HepG2 (cell line): ENCODE measurements at regions of chr2 and their contacts with region 1.

Region 1: GRCh38 chr2:191521608-191522208 is 156.2 kb upstream of the NABP1 start:
- DNase-seq: peak; percentile 40
- ATAC-seq: no peak
- H3K4me3 ChIP-seq: no peak overlapping the region
- H3K27ac ChIP-seq: no peak overlapping the region
- H3K4me1 ChIP-seq: no peaks in the 10 kb centered on the region
- H3K27me3 ChIP-seq: peaks cover 0 to 11% of the 10 kb centered on the region in 2 experiments; a peak in 2 of 5 replicates
- CTCF ChIP-seq: peak; percentile 74
- EP300 ChIP-seq: no peak
- POLR2A ChIP-seq: no peak
- RAD21 ChIP-seq: 0 out of 2 replicates have a peak, but pooled peaks have one; percentile 31

Region 2: GRCh38 chr2:191051825-191052778 is 469.6 kb before region 1 on chr2:
- CTCF ChIA-PET with region 1: no interaction called
- POLR2A ChIA-PET with region 1: no interaction called
- in situ Hi-C with region 1: loop called (anchors 25 kb)
- intact Hi-C with region 1: loop called (anchors 1 kb)
- DNase-seq: peak; percentile 56
- ATAC-seq: peak; percentile 72
- H3K4me3 ChIP-seq: no peak overlapping the region
- H3K27ac ChIP-seq: no peak overlapping the region
- H3K4me1 ChIP-seq: peaks cover 17% of the 10 kb centered on the region
- H3K27me3 ChIP-seq: peaks cover 0 to 1% of the 10 kb centered on the region in 2 experiments; a peak in 2 of 5 replicates
- CTCF ChIP-seq: peak; percentile 64
- EP300 ChIP-seq: no peak
- POLR2A ChIP-seq: no peak
- RAD21 ChIP-seq: no peak

Region 3: GRCh38 chr2:191165176-191165643 is 356.5 kb before region 1 on chr2:
- CTCF ChIA-PET with region 1: interaction called, 29 read pairs
- POLR2A ChIA-PET with region 1: no interaction called
- in situ Hi-C with region 1: loop called (anchors 10 kb)
- intact Hi-C with region 1: loop called (anchors 1 kb)
- DNase-seq: peak; percentile 23
- ATAC-seq: peak; percentile 82
- H3K4me3 ChIP-seq: no peak overlapping the region
- H3K27ac ChIP-seq: no peak overlapping the region
- H3K4me1 ChIP-seq: peaks cover 16% of the 10 kb centered on the region
- H3K27me3 ChIP-seq: no peaks in the 10 kb centered on the region
- CTCF ChIP-seq: peak; percentile 60
- EP300 ChIP-seq: no peak
- POLR2A ChIP-seq: no peak
- RAD21 ChIP-seq: no peak

Region 4: DNA sequence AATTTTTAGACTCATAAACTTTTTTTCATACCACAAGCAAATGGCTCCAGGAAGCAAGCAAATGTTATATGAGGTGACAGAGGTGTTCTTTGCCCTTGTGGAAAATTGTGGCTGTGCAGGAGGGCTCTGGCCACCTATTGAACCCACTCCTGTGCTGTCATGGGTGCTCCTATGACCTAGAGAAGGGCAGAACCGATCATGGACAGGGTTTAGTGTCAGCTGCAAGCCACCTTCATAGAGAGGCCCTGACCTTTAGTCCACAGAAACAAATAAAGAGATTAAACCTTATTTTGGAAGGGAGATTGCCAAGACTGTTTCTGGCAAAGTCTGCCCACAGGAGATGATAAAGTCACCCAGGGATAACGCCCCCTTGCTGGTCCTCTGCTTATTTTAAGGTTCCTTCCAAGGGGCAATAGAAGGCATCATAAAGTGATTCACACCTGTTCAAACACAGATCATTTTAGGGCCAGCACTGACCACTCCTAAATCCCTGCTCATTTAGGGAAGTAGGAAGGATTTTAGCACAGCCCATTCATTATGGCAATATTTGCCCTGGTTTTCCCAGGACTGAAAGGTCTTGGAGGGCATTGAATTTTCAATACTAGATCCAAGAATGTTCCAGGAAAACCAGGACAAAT is 344.8 kb before region 1 on chr2:
- CTCF ChIA-PET with region 1: no interaction called
- POLR2A ChIA-PET with region 1: no interaction called
- in situ Hi-C with region 1: no loop called
- intact Hi-C with region 1: no loop called
- DNase-seq: no peak
- ATAC-seq: no peak; the same call in 2 of the 3 replicates
- H3K4me3 ChIP-seq: no peak overlapping the region
- H3K27ac ChIP-seq: no peak overlapping the region
- H3K4me1 ChIP-seq: no peaks in the 10 kb centered on the region
- H3K27me3 ChIP-seq: no peaks in the 10 kb centered on the region
- CTCF ChIP-seq: no peak
- EP300 ChIP-seq: no peak
- POLR2A ChIP-seq: no peak
- RAD21 ChIP-seq: no peak

Region 5: GRCh38 chr2:191231995-191232394 is 289.7 kb before region 1 on chr2:
- CTCF ChIA-PET with region 1: interaction called, 12 read pairs
- POLR2A ChIA-PET with region 1: no interaction called
- in situ Hi-C with region 1: no loop called
- intact Hi-C with region 1: loop called (anchors 1 kb)
- DNase-seq: no peak
- ATAC-seq: no peak; the same call in 2 of the 3 replicates
- H3K4me3 ChIP-seq: no peak overlapping the region
- H3K27ac ChIP-seq: no peak overlapping the region
- H3K4me1 ChIP-seq: no peaks in the 10 kb centered on the region
- H3K27me3 ChIP-seq: no peaks in the 10 kb centered on the region
- CTCF ChIP-seq: peak; percentile 66
- EP300 ChIP-seq: no peak
- POLR2A ChIP-seq: no peak
- RAD21 ChIP-seq: peak; percentile 69

Region 6: DNA sequence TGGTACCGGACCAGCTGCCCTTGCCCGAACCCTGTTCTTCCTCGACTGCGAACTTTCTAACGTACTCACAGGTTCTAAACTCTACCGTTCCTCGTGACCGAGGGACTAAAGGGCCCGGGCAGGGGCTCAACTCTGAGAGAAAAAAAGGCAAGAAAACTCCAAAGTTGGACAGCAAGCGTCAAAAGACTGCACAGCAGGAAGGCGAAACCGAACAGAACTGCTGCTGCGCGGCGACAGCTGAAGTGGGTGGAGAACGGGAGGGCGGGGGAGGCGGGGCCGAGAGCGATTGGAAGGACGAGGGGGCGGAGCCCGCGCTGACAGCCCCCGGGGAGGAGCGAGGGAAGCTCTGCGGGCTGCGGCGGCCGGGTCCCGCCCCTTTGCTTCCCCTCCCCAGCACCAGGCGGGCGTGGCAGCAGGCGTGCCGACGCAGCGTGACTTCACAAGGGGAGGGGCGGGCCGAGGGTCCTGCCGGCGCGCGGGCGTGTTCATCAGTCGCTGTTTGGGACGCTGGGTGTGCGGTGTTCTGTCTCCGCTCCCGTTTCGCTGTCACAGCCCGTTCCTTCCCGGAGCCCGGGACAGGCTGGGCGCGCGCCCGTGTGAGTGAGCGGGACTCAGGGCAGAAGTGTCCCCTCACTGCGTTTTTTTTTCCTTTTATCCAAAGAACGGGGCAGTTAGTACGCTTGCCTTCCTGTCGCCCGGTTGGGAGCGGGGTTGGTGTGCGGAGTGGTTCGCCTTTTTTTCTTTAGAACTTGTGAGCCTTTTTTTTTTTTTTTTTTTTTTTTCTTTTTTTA is 156.1 kb after region 1 on chr2 and contains the start of gene NABP1:
- CTCF ChIA-PET with region 1: no interaction called
- POLR2A ChIA-PET with region 1: no interaction called
- in situ Hi-C with region 1: no loop called
- intact Hi-C with region 1: no loop called
- DNase-seq: peak; percentile 92
- ATAC-seq: peak; percentile 95
- H3K4me3 ChIP-seq: peak within 1 kb of the TSS; percentile 83 to 87 (median 86)
- H3K27ac ChIP-seq: peak within 1 kb of the TSS; percentile 73
- H3K4me1 ChIP-seq: peaks cover 39% of the 10 kb centered on the region
- H3K27me3 ChIP-seq: no peaks in the 10 kb centered on the region; a peak in 1 of 5 replicates
- CTCF ChIP-seq: no peak
- EP300 ChIP-seq: peak; percentile 14 to 53; a peak in 2 of 4 replicates
- POLR2A ChIP-seq: peak; percentile 100
- RAD21 ChIP-seq: peak; percentile 45; the same call in 1 of the 2 replicates
- total RNA-seq, gene NABP1: 4.9 and 14.9 TPM in 2 replicates